Ovary (tissue), 10 donors: ENCODE measurements at regions of chr12 and their contacts with region 1.

Region 1: DNA sequence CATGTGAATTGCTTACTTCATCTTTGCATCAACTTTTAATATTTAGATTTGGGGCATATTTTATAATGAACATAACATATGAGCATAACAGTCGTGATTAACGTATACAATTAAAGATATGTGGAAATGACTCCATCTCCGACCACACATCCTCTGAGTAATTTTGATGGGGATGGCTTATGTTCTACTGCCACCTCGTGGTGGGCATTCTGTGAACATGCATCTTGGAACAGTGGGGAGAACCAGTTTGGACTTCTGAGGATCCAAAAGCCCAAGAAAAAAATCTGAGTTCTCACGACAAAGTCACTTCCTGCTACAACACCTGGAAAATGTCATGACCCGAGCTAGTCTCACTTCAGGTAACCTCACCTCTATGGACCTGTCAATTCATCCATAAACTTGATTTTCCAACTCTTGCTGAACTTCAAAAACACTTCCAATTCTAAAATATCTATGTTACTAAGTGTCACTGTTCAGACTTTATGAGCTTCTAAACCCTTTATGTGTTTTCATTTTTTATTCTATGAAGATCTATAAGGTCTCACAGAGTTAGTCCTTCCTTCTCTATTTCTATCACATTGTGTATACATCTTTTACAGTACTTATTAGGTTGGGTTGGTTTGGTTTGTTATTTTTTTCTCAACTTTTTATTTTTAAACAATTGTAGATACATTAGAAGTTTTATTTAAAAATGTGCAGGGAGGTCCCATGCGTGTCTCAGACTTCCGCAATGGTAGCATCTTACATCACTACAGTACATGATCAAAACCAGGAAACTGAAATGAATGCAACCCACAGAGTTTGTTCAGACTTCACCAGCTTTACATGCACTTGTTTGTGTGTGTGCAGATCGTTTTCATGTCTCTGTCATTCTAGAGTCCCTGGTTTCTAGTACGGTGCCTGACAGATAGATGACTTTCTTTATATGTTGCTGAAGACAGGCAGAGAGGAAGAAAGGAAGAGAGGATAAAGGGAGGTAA is 38.2 kb upstream of the STAB2 start:
- DNase-seq: peak; percentile 33 to 67 (median 51)
- H3K4me3 ChIP-seq: no peak overlapping the region
- H3K27ac ChIP-seq: no peak overlapping the region
- H3K4me1 ChIP-seq: no peaks in the 10 kb centered on the region
- H3K27me3 ChIP-seq: no peaks in the 10 kb centered on the region
- CTCF ChIP-seq: peak in 2 of 3 donors; percentile 53 to 72
- EP300 ChIP-seq: no peak
- POLR2A ChIP-seq: no peak

Region 2: DNA sequence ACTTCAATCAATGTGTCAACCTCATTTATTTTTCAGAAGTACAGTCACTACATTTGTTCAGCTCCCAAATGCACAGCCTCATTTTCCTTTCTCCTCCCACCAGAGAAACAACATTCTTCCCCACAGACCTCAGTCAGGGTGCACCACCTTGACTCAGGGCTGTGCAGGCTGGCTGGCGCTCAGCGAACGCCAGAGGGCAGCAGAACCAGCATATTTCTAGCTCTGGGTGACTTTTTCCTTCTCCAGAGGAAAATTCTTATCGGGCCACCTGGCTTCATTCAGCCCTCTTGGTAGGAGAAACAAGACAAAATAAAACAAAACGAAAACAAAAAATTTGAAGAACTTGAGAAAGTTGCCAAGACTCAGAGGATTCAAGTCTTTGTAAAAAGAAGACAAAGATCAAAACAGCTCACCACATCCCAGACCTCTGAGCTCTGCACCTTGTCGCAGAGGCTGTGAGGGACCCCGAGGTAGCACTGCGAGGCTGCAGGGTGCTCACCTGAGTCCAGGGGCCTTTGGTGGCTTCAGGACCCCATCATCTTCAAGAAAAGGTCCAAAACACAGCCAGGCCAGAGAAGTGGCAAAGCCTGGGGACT is 665.6 kb before region 1 on chr12:
- intact Hi-C with region 1: loop called in 2 of 4 experiments (anchors 5 to 10 kb)
- DNase-seq: peak; percentile 53 to 84 (median 59)
- H3K4me3 ChIP-seq: no peak overlapping the region
- H3K27ac ChIP-seq: no peak overlapping the region
- H3K4me1 ChIP-seq: peaks cover 2% of the 10 kb centered on the region
- H3K27me3 ChIP-seq: no peaks in the 10 kb centered on the region
- CTCF ChIP-seq: peak in 1 of 3 donors; percentile 41
- EP300 ChIP-seq: no peak
- POLR2A ChIP-seq: no peak

Region 3: GRCh38 chr12:102948941-102949352 is 600.0 kb before region 1 on chr12:
- intact Hi-C with region 1: loop called in 3 of 4 experiments (anchors 5 to 10 kb)
- DNase-seq: peak in 2 of 5 donors; percentile 44 to 66
- H3K4me3 ChIP-seq: no peak overlapping the region
- H3K27ac ChIP-seq: no peak overlapping the region
- H3K4me1 ChIP-seq: no peaks in the 10 kb centered on the region
- H3K27me3 ChIP-seq: no peaks in the 10 kb centered on the region
- CTCF ChIP-seq: peak in 2 of 3 donors; percentile 34 to 53
- EP300 ChIP-seq: no peak
- POLR2A ChIP-seq: no peak

Region 4: GRCh38 chr12:103455020-103455763 is 93.7 kb before region 1 on chr12:
- intact Hi-C with region 1: no loop called
- DNase-seq: no peak
- H3K4me3 ChIP-seq: no peak overlapping the region
- H3K27ac ChIP-seq: no peak overlapping the region
- H3K4me1 ChIP-seq: no peaks in the 10 kb centered on the region
- H3K27me3 ChIP-seq: no peaks in the 10 kb centered on the region
- CTCF ChIP-seq: no peak
- EP300 ChIP-seq: no peak
- POLR2A ChIP-seq: no peak

Region 5: GRCh38 chr12:103626498-103626897 is 77.6 kb after region 1 on chr12:
- intact Hi-C with region 1: no loop called
- DNase-seq: peak in 2 of 5 donors; percentile 24 to 40
- H3K4me3 ChIP-seq: no peak overlapping the region
- H3K27ac ChIP-seq: no peak overlapping the region
- H3K4me1 ChIP-seq: no peaks in the 10 kb centered on the region
- H3K27me3 ChIP-seq: no peaks in the 10 kb centered on the region
- CTCF ChIP-seq: no peak
- EP300 ChIP-seq: no peak
- POLR2A ChIP-seq: no peak